Naive thymus-derived CD4-positive, alpha-beta T cell (primary cell): ENCODE measurements at regions of chr6 and their contacts with region 1.

Region 1: DNA sequence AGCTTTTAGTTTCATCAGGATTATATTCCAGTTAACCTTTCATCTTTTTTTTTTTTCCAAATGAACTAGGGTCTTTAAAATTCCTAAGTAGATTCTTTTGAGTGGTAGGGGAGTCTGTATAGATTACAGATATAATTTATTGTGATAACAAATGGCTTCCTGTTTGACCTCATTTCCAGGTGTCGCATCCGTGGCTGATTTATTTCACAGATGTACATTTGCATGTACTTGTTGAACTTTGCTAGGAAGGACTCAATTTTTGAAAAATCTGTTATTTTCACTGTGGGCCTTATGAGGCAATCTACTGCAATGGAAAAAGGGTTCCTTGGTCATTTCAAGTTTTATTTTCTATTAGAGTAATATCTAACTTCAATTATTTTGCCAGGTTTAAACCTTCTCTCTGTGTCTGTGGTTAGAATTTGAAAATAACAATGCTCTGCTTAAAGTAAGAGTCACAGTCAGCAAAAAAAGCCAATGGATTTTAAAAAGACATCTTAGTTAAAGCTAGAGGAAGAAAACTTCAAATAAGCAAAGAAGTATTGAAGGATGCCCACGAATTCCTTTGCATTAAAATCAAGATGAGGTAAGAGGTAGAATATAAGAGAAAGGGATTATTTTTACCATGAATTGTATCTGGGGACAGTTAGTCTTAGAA is 57.9 kb downstream of the SAMD5 start:
- DNase-seq: no peak
- ATAC-seq: no peak
- H3K4me3 ChIP-seq: no peak overlapping the region
- H3K4me3 Mint-ChIP-seq: no peak overlapping the region
- H3K27ac ChIP-seq: no peak overlapping the region
- H3K27ac Mint-ChIP-seq: no peak overlapping the region
- H3K4me1 ChIP-seq: no peaks in the 10 kb centered on the region
- H3K4me1 Mint-ChIP-seq: no peaks in the 10 kb centered on the region
- H3K27me3 ChIP-seq: peaks cover 0 to 3% of the 10 kb centered on the region in 2 donors
- H3K27me3 Mint-ChIP-seq: peaks cover 0 to 15% (median 8%) of the 10 kb centered on the region in 5 donors

Region 2: DNA sequence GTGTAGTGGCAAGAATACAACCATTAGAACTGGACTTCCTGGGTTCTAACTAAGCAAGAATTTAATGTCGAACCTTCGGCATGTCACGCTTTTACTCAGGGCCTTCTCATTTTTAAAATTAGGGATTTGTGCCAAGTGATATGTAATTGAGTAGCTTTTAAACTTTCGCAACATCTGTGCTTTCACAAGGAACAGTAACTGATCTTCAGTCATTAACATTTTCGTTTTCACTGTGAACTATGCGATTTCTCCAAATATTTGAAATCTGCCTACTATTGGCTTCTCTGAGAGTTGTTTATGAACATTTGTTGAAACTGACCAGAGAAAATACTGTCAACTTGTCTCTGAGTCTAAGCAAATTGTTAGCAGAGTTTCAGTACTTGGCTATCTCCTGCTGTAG is 1509.9 kb before region 1 on chr6:
- CTCF ChIA-PET with region 1: interaction called, 10 read pairs
- POLR2A ChIA-PET with region 1: no interaction called
- intact Hi-C with region 1: no loop called
- DNase-seq: no peak
- ATAC-seq: no peak
- H3K4me3 ChIP-seq: no peak overlapping the region
- H3K4me3 Mint-ChIP-seq: no peak overlapping the region
- H3K27ac ChIP-seq: no peak overlapping the region
- H3K27ac Mint-ChIP-seq: no peak overlapping the region
- H3K4me1 ChIP-seq: no peaks in the 10 kb centered on the region
- H3K4me1 Mint-ChIP-seq: no peaks in the 10 kb centered on the region
- H3K27me3 ChIP-seq: no peaks in the 10 kb centered on the region
- H3K27me3 Mint-ChIP-seq: peaks cover 0 to 16% (median 10%) of the 10 kb centered on the region in 5 donors

Region 3: DNA sequence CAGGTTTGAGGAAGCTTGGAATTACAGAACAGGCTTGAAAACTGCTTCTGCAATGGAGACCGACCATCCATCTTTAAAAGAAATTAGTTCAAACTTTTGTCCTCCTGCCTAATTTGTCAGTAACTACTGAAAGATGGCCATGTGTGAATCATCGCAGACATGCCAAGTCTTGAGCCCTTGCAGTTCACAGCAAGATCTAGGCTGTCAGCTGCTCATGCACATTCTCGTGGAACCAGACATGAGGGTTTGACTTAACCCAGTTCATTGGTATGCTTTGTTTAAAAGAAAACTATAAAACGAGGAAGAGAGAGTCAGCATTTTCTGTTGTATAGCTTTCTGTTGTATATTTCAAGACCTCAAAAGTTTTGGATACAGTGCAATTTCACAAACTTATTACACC is 131.9 kb before region 1 on chr6:
- CTCF ChIA-PET with region 1: no interaction called
- POLR2A ChIA-PET with region 1: no interaction called
- intact Hi-C with region 1: no loop called
- DNase-seq: no peak
- ATAC-seq: no peak
- H3K4me3 ChIP-seq: no peak overlapping the region
- H3K4me3 Mint-ChIP-seq: no peak overlapping the region
- H3K27ac ChIP-seq: no peak overlapping the region
- H3K27ac Mint-ChIP-seq: no peak overlapping the region
- H3K4me1 ChIP-seq: no peaks in the 10 kb centered on the region
- H3K4me1 Mint-ChIP-seq: no peaks in the 10 kb centered on the region
- H3K27me3 ChIP-seq: no peaks in the 10 kb centered on the region
- H3K27me3 Mint-ChIP-seq: peaks cover 0 to 20% (median 0%) of the 10 kb centered on the region in 5 donors